ENCODE measurements at regions of chr4 and their contacts with region 1.

Region 1: DNA sequence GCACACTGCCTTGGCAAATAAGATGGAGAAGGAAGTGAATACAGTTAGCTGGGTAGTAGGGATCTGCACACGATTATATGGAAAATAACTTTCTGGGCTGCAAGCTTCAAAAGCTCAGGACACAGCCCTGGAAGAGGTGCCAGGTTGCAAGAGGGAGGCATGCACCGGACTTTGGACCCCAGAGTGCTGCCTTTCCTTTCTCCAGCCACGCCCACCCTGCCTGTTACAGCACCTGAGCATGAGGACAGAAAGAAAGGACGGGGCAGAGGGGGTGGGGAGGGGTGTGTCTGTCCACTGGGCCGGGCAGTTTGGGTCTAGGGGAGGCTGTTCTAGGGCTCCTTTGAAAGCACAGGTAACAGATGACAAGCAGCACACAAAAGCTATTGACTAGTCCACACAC is 152.8 kb downstream of the ENPP6 start:
- DNase-seq: no peak
- H3K4me3 ChIP-seq: no peak overlapping the region
- H3K27ac ChIP-seq: no peak overlapping the region
- H3K4me1 ChIP-seq: no peaks in the 10 kb centered on the region
- H3K27me3 ChIP-seq: no peaks in the 10 kb centered on the region
- CTCF ChIP-seq: no peak
- POLR2A ChIP-seq: no peak

Region 2: GRCh38 chr4:183571350-183571941 is 493.4 kb before region 1 on chr4:
- intact Hi-C with region 1: loop called (anchors 5 kb)
- DNase-seq: peak in 1 of 2 donors; percentile 64
- H3K4me3 ChIP-seq: peak overlapping the region in 1 of 3 donors; percentile 10
- H3K27ac ChIP-seq: no peak overlapping the region
- H3K4me1 ChIP-seq: no peaks in the 10 kb centered on the region
- H3K27me3 ChIP-seq: no peaks in the 10 kb centered on the region
- CTCF ChIP-seq: no peak
- POLR2A ChIP-seq: no peak

Region 3: GRCh38 chr4:184114431-184114830 is 49.6 kb after region 1 on chr4:
- intact Hi-C with region 1: no loop called
- DNase-seq: no peak
- H3K4me3 ChIP-seq: no peak overlapping the region
- H3K27ac ChIP-seq: no peak overlapping the region
- H3K4me1 ChIP-seq: no peaks in the 10 kb centered on the region
- H3K27me3 ChIP-seq: peaks cover 0 to 3% of the 10 kb centered on the region in 2 donors
- CTCF ChIP-seq: no peak
- POLR2A ChIP-seq: no peak

Region 4: DNA sequence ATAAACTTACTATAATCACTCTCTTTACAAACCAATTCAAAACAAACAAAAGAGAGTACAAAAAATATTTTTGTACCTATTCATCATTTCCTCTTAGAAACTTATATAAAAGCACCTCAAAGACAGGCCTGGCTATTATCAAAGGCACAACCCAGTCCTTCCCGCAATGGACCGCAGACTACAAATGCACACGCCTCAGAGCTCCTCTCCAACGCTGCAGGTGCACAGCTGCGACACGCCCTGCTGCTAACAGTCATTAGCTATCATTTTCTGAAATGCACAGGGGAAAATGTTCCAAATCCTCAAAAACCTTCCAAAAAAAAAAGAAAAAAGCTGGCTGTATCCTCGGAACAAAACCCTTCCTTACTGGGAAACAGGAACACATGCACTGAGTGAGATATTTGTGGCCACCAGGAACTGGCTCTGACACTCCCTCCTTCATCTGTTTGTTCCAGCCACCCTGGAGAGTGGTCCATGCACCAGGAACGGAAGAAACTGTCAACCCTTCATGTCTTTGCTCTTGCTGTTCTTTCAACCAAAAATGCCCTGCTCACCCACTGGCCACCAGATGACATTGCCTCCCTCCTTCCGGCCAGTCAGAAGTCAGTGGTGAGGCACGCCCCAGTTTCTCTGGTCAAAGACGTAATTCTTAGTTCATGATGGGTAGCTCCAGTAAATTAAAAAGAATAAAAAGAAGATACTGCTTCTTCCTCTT is 392.8 kb after region 1 on chr4:
- intact Hi-C with region 1: no loop called
- DNase-seq: no peak
- H3K4me3 ChIP-seq: no peak overlapping the region
- H3K27ac ChIP-seq: no peak overlapping the region
- H3K4me1 ChIP-seq: peaks cover 0 to 13% of the 10 kb centered on the region in 2 donors
- H3K27me3 ChIP-seq: no peaks in the 10 kb centered on the region
- CTCF ChIP-seq: no peak
- POLR2A ChIP-seq: no peak